HepG2 (cell line): ENCODE measurements at regions of chr2 and their contacts with region 1.

Region 1: DNA sequence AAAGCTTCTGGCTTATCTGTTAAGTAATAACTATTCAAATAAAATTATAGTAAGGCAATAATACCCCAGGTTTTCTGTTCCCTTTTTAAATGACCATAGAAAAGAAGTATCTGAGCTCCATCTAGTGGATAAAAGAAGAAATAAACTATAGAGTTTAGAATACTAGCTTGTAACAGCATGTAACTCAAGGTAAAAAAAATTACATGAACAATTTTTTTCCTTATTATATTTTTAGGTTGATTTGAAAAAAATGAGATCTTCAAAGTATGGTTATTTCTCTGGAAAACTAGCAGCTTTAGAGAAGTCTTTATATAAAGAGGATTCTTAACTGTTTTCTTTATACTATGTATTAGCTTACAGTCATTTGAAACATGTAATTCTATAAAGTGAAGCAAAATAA is 58.1 kb downstream of the NCKAP1 start:
- DNase-seq: peak; percentile 36
- ATAC-seq: peak; percentile 79
- H3K4me3 ChIP-seq: no peak overlapping the region
- H3K27ac ChIP-seq: no peak overlapping the region
- H3K4me1 ChIP-seq: no peaks in the 10 kb centered on the region
- H3K27me3 ChIP-seq: no peaks in the 10 kb centered on the region
- CTCF ChIP-seq: peak; percentile 45
- EP300 ChIP-seq: no peak
- POLR2A ChIP-seq: no peak
- RAD21 ChIP-seq: no peak

Region 2: GRCh38 chr2:182666674-182667314 is 313.3 kb before region 1 on chr2:
- CTCF ChIA-PET with region 1: interaction called, 5 read pairs
- POLR2A ChIA-PET with region 1: no interaction called
- in situ Hi-C with region 1: no loop called
- intact Hi-C with region 1: loop called (anchors 2 kb)
- DNase-seq: peak; percentile 31
- ATAC-seq: peak; percentile 79
- H3K4me3 ChIP-seq: no peak overlapping the region
- H3K27ac ChIP-seq: no peak overlapping the region
- H3K4me1 ChIP-seq: peaks cover 16% of the 10 kb centered on the region
- H3K27me3 ChIP-seq: no peaks in the 10 kb centered on the region; a peak in 1 of 5 replicates
- CTCF ChIP-seq: peak; percentile 45
- EP300 ChIP-seq: no peak
- POLR2A ChIP-seq: no peak
- RAD21 ChIP-seq: no peak

Region 3: GRCh38 chr2:182763311-182763912 is 216.7 kb before region 1 on chr2:
- CTCF ChIA-PET with region 1: interaction called, 19 read pairs
- POLR2A ChIA-PET with region 1: interaction called, 3 read pairs
- in situ Hi-C with region 1: loop called (anchors 5 kb)
- intact Hi-C with region 1: loop called (anchors 1 kb)
- DNase-seq: peak; percentile 62
- ATAC-seq: peak; percentile 84
- H3K4me3 ChIP-seq: no peak overlapping the region
- H3K27ac ChIP-seq: no peak overlapping the region
- H3K4me1 ChIP-seq: 0 out of 2 replicates have a peak, but pooled peaks cover 7% of the 10 kb centered on the region
- H3K27me3 ChIP-seq: no peaks in the 10 kb centered on the region
- CTCF ChIP-seq: peak; percentile 75
- EP300 ChIP-seq: no peak
- POLR2A ChIP-seq: no peak
- RAD21 ChIP-seq: 0 out of 2 replicates have a peak, but pooled peaks have one; percentile 27

Region 4: DNA sequence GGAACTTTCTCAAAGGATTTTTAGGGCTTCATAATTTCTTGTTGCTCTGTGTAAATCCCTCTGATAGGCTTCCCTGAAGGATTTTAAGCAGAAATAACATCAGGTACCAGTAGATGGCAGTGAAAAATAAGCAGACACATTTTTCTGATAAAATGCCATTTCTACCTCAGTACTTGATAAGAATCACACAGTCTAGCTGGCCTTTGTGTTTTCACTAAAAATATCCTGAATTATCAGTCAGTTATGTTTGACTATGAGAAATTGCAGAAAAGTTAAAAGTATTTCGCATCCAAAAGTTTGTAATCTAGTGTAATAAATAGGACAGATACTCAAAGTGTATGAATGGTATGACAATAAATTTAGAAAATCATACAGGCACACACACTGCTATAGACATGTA is 195.3 kb before region 1 on chr2:
- CTCF ChIA-PET with region 1: interaction called, 24 read pairs
- POLR2A ChIA-PET with region 1: interaction called, 3 read pairs
- in situ Hi-C with region 1: no loop called
- intact Hi-C with region 1: loop called (anchors 1 kb)
- DNase-seq: peak; percentile 52
- ATAC-seq: peak; percentile 70
- H3K4me3 ChIP-seq: no peak overlapping the region
- H3K27ac ChIP-seq: no peak overlapping the region
- H3K4me1 ChIP-seq: no peaks in the 10 kb centered on the region
- H3K27me3 ChIP-seq: no peaks in the 10 kb centered on the region
- CTCF ChIP-seq: peak; percentile 75
- EP300 ChIP-seq: no peak
- POLR2A ChIP-seq: no peak
- RAD21 ChIP-seq: peak; percentile 38; the same call in 1 of the 2 replicates